ENCODE measurements at regions of chr1 and their contacts with region 1.

Region 1: DNA sequence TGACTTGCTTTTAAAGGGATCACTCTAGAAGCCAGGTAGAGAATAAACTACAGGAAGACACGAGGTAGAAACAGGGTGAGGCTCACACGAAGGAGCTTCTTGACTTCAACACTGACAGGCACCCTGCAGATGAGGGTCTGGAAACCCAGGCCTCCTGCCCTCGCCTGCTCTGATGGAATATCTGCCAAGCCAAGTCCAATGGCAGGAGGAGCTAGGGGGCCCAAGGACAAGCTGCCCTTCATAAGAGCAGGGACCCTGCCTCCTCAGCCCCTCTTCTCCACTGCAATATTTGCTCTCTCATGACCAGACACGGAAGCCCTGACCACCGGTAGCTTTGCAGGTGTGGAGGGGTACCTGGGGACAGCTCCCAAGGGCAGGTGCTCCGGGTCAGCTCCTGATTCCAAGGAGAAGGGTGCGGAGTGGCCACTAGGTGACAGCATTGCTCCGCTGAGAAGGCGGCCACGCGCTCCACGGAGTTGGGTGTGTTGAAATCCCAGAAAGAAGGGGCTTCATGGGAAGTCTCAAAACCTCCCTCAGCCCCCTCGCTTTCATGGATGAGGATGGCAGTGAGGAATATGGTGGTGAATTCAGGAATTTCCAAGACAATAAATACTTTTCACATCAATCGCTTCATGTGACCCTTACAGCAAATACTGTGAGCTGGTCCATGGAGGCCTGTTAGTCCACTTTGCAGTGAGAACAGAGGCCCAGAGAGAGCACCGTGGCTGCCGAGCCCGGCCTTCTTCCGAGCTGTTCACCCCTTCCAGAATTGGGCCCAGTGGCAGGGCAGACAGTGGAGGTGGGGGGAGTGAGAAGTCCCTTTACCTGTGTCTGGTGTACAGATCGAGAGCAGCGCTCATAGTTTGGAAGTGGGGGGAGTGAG is 33.2 kb upstream of the PAX7 start:
- DNase-seq: peak; percentile 51 to 71
- ATAC-seq: peak; percentile 73 to 89 (median 80)
- H3K4me3 ChIP-seq: no peak overlapping the region
- H3K27ac ChIP-seq: no peak overlapping the region
- H3K4me1 ChIP-seq: no peaks in the 10 kb centered on the region
- H3K27me3 ChIP-seq: peaks cover 0 to 18% (median 0%) of the 10 kb centered on the region in 3 donors
- CTCF ChIP-seq: peak; percentile 91

Region 2: GRCh38 chr1:18632783-18633421 is 35.5 kb after region 1 on chr1:
- intact Hi-C with region 1: no loop called
- DNase-seq: no peak
- ATAC-seq: peak in 1 of 4 donors; percentile 45
- H3K4me3 ChIP-seq: peak overlapping the region; percentile 64
- H3K27ac ChIP-seq: peak overlapping the region; percentile 55
- H3K4me1 ChIP-seq: no peaks in the 10 kb centered on the region
- H3K27me3 ChIP-seq: peaks cover 0 to 87% (median 27%) of the 10 kb centered on the region in 3 donors
- CTCF ChIP-seq: no peak

Region 3: DNA sequence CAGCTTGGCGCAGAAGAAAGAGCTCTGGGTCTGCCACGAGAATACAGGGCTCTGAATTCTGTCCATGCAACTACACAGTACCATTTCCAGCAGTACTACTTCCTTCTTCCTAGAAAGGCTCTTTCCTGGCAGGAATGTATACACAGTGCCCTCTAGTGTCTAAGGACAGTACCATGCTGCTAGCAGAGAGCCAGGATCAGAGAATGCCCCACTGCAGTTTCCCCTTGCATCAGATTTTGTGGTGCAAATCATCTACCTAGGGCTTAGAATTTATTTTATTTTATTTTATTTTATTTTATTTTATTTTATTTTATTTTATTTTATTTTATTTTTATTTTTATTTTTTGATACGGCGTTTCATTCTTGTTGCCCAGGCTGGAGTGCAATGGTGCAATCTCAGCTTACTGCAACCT is 84.0 kb after region 1 on chr1:
- intact Hi-C with region 1: loop called (anchors 2 to 5 kb)
- DNase-seq: no peak
- ATAC-seq: peak in 3 of 4 donors; percentile 68 to 83 (median 70)
- H3K4me3 ChIP-seq: no peak overlapping the region
- H3K27ac ChIP-seq: no peak overlapping the region
- H3K4me1 ChIP-seq: no peaks in the 10 kb centered on the region
- H3K27me3 ChIP-seq: no peaks in the 10 kb centered on the region
- CTCF ChIP-seq: peak; percentile 52

Region 4: GRCh38 chr1:18703041-18703641 is 105.7 kb after region 1 on chr1:
- intact Hi-C with region 1: no loop called
- DNase-seq: no peak
- ATAC-seq: no peak
- H3K4me3 ChIP-seq: no peak overlapping the region
- H3K27ac ChIP-seq: no peak overlapping the region
- H3K4me1 ChIP-seq: no peaks in the 10 kb centered on the region
- H3K27me3 ChIP-seq: peaks cover 0 to 13% (median 5%) of the 10 kb centered on the region in 3 donors
- CTCF ChIP-seq: no peak

Region 5: DNA sequence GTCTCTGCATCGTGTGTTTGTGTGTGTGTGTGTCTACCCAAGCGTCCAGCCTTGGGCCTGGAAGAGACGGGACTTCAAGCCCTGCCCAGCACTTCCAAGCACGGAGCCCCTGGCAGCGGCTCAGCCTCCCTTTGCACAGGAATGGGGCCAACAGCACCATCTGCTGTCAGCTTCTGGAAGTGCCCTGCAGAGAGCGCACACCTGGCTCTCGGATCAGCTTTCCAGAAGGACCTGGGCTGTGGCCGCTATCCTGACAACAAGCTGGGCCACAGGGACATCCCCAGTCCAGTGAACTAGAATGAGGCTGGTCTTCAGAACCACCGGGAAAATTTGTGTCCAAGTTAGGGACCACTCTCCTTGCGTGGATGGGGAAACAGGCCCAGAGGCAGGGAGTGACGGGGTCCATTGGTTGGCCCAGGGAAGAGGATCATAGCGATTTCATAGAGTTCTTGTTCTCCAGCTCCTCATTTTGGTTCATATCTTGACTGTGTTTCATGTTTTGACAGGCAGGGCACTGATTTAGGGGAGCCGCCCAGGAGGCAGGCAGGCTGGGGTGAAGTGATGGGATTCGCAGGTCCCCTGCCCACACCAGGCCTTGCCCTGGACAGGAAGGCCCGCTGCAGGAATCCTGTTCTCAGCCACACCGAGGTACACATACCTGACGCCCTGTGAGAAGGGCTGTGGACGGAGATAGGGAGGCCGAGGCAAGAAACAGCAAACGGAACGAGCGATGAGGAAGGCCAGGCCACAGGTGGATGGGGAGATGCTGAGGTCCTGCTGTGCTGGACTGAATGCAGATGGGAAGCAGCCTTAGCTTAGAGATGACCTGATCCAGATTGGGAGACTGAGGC is 223.6 kb after region 1 on chr1:
- intact Hi-C with region 1: loop called (anchors 1 to 2 kb)
- DNase-seq: peak; percentile 78 to 88
- ATAC-seq: peak; percentile 86 to 94 (median 93)
- H3K4me3 ChIP-seq: no peak overlapping the region
- H3K27ac ChIP-seq: no peak overlapping the region
- H3K4me1 ChIP-seq: no peaks in the 10 kb centered on the region
- H3K27me3 ChIP-seq: peaks cover 0 to 42% (median 8%) of the 10 kb centered on the region in 3 donors
- CTCF ChIP-seq: peak; percentile 88

Region 6: DNA sequence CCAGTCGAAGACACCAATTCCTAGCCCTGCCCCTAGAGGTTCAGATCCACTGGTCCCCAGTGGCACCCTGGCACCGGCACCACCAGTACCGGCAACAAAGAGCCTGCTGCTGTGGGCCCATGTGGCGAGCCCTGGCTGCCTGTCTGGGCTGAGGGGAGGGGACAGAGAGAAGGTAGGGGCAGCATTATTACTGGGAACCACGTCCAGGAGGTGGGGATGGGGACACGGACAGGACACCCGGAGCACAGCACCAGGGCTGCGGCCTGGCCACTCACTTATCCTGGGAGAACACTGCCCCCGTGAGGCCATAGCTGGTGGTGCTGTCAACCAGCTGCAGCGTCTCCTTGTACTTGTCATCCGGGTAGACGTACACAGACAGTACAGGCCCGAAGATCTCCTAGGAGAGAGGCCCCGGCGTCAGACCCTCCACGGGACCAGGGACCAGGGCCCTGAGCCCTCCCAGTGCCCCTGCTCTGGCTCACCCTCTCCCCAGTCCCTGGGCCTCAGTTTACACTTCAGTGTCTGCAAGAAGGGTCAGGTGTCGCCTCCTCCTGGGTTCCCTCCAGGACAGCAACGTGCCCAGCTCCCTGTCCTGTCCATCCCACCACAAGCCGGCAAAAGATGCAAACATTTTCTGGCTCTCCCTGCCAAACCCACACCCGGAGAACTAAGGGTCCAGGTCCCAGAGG is 277.9 kb after region 1 on chr1:
- intact Hi-C with region 1: loop called (anchors 5 kb)
- DNase-seq: peak; percentile 81 to 90
- ATAC-seq: peak; percentile 81 to 86 (median 83)
- H3K4me3 ChIP-seq: no peak overlapping the region
- H3K27ac ChIP-seq: no peak overlapping the region
- H3K4me1 ChIP-seq: no peaks in the 10 kb centered on the region
- H3K27me3 ChIP-seq: no peaks in the 10 kb centered on the region
- CTCF ChIP-seq: peak; percentile 73

Region 7: DNA sequence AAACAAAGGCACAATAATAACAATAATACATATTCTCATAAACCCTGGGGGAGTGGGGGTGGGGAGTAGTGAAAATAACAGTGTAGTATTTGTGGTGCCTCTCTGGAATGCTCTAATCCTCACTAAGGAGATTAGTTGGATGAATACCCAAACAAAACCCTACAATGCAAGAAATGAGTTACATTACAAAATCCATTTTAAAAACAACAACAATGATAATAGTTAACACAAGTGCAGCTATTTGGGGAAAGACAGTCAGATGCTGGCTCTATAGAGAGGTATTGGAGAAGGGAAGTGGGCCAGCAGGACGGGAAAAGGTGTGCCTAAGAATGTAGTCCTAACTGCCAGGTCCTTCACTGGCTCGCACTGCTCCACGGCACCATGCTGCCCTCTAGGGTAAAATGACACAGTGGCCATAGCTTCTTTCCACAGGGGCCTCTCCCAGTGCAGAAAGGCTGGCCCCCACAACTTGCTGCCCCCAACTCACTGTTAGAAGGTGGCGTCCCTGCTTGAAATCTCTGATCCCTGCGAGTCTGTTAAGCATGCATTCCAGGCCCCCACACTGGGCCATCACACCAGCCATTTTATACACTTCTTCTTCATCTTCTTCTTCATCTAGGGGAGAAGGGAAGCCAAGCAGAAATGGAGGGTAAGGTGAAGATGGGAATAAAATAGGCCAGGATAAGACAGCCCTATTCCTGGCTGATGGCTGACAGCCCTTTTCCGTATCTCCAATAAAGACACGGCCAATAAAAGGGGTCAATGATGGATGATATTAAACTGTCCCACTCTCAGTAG is 498.8 kb after region 1 on chr1:
- intact Hi-C with region 1: loop called in 1 of 2 experiments (anchors 10 kb)
- DNase-seq: peak; percentile 29 to 69
- ATAC-seq: peak; percentile 76 to 87 (median 82)
- H3K4me3 ChIP-seq: no peak overlapping the region
- H3K27ac ChIP-seq: no peak overlapping the region
- H3K4me1 ChIP-seq: peaks cover 10% of the 10 kb centered on the region
- H3K27me3 ChIP-seq: no peaks in the 10 kb centered on the region
- CTCF ChIP-seq: peak; percentile 56